ENCODE measurements at regions of chr12 and their contacts with region 1.

Region 1: DNA sequence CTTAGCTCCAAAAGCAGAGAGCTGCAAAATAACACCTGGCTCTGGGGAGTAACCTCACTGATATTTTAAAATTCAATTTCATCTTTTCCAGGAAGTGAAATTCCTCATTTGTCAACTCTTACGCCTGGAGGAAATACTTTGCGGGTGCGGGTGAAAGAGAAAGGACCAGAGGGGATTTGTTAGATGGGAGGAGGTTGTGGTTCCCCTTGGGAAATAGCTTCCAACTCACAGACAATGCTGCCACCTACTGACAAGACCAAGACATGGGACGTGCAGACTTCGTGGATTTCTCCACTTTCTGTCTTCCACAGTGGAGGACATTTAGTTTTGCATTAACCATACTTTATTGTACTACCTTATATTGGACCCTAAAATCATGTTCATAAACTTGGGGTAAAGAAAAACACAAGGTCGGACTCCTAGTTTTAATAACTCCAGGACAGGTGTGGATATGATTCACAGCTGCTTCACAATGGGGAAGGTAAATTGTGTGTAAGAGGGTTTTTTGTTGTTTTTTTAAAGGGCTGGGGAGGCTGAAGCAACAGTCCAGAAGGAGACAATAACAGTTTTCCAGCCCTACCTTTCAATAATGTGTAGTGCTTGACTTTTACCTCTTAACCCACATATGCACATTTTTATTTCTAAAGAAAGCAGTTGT is 10.8 kb downstream of the FBXL14 start:
- DNase-seq: peak; percentile 36
- ATAC-seq: peak; percentile 96
- H3K4me3 Mint-ChIP-seq: peak overlapping the region; percentile 69
- H3K27ac Mint-ChIP-seq: no peak overlapping the region
- H3K4me1 Mint-ChIP-seq: peaks cover 17% of the 10 kb centered on the region
- H3K27me3 Mint-ChIP-seq: no peaks in the 10 kb centered on the region
- CTCF ChIP-seq: peak; percentile 96

Region 2: GRCh38 chr12:442235-442884 is 1141.2 kb before region 1 on chr12:
- CTCF ChIA-PET with region 1: interaction called, 4 read pairs
- POLR2A ChIA-PET with region 1: no interaction called
- intact Hi-C with region 1: loop called (anchors 2 kb)
- DNase-seq: no peak
- ATAC-seq: no peak
- H3K4me3 Mint-ChIP-seq: no peak overlapping the region
- H3K27ac Mint-ChIP-seq: no peak overlapping the region
- H3K4me1 Mint-ChIP-seq: no peaks in the 10 kb centered on the region
- H3K27me3 Mint-ChIP-seq: peaks cover 2% of the 10 kb centered on the region
- CTCF ChIP-seq: no peak

Region 3: GRCh38 chr12:575948-576612 is 1007.5 kb before region 1 on chr12:
- CTCF ChIA-PET with region 1: interaction called, 14 read pairs
- POLR2A ChIA-PET with region 1: interaction called, 4 read pairs
- intact Hi-C with region 1: loop called (anchors 1 kb)
- DNase-seq: peak; percentile 91
- ATAC-seq: peak; percentile 99
- H3K4me3 Mint-ChIP-seq: peak overlapping the region; percentile 75
- H3K27ac Mint-ChIP-seq: no peak overlapping the region
- H3K4me1 Mint-ChIP-seq: peaks cover 11% of the 10 kb centered on the region
- H3K27me3 Mint-ChIP-seq: no peaks in the 10 kb centered on the region
- CTCF ChIP-seq: peak; percentile 70

Region 4: DNA sequence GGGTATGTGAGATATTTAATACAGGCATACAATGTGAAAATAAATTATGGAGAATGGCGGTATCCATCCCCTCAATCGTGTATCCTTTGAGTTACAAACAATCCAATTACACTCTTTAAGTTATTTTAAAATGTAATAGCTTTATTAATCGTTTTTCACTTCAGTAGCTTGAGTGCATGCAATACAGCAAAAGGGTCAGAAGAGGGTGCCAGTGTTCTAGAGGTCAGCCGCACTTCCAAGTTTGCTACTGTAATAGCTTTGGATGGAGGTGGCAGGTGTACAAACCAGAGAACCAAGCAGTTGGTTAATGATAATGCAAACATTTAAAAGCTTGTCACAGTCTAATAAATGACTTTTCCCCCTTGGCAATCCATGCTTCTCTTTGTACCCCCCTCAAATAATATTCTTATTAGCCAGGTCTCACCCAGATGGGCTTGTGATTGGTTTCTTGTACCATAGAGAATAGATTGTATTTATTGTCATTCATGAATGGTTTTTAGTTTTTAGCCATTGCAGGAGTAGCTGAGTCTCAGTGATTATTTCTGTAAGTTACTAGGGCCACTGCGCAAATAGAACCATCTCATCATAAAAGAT is 465.5 kb before region 1 on chr12:
- CTCF ChIA-PET with region 1: interaction called, 287 read pairs
- POLR2A ChIA-PET with region 1: interaction called, 14 read pairs
- intact Hi-C with region 1: loop called (anchors 1 kb)
- DNase-seq: peak; percentile 40
- ATAC-seq: peak; percentile 81
- H3K4me3 Mint-ChIP-seq: no peak overlapping the region
- H3K27ac Mint-ChIP-seq: no peak overlapping the region
- H3K4me1 Mint-ChIP-seq: peaks cover 2% of the 10 kb centered on the region
- H3K27me3 Mint-ChIP-seq: no peaks in the 10 kb centered on the region
- CTCF ChIP-seq: peak; percentile 42

Region 5: GRCh38 chr12:1517007-1517406 is 66.5 kb before region 1 on chr12:
- CTCF ChIA-PET with region 1: interaction called, 6 read pairs
- POLR2A ChIA-PET with region 1: no interaction called
- intact Hi-C with region 1: loop called (anchors 2 kb)
- DNase-seq: no peak
- ATAC-seq: no peak
- H3K4me3 Mint-ChIP-seq: no peak overlapping the region
- H3K27ac Mint-ChIP-seq: no peak overlapping the region
- H3K4me1 Mint-ChIP-seq: no peaks in the 10 kb centered on the region
- H3K27me3 Mint-ChIP-seq: peaks cover 19% of the 10 kb centered on the region
- CTCF ChIP-seq: no peak

Region 6: DNA sequence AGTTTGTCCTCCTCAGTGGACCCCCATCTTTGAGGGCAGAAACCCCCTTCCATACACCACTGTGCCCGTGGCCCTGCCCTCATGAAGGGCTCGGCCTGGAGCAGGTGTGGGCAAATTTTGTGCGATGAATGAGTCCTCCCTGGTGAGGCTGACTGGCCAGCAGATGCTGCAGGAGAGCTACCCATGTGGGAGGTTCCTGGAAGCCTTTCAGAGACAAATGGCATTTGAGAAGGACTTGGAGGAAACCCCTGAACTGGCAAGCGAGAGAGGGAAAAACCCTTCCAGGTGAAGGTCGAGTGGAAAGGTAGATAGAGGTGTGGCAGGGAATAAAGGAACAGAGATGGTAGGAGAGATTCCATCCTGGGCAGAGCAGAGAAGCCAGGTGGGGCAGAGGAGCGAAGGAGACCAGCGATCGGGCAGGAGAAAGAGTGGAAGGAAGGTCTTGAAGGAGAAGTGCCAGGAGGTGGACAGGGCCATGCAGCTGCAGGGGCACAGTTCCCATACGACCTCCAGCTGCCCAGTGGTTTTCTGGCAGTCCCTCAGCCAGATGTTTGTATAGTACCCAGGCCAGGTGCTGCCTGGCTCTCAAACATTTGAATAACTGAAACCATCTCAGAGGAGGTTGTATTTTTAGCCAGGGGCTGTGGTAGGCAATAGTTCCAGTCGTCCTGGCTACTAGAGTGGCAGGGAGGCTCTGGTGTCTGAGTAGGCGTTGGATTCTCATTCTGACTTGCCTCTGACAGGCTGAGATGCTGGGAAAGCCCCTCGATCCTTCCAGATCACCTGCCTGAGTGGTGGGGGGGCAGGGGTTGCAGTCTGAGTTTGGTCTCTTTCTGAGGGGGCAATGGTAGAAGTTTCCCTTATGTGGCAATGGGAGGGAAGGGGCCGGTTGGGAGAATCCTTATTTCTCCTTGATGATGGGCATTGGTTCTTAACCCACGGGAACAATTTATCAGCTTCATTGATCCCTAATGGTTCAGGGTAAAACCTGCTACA is 29.3 kb before region 1 on chr12:
- CTCF ChIA-PET with region 1: no interaction called
- POLR2A ChIA-PET with region 1: no interaction called
- intact Hi-C with region 1: loop called (anchors 2 kb)
- DNase-seq: peak; percentile 36
- ATAC-seq: peak; percentile 89
- H3K4me3 Mint-ChIP-seq: peak overlapping the region; percentile 11
- H3K27ac Mint-ChIP-seq: peak overlapping the region; percentile 81
- H3K4me1 Mint-ChIP-seq: peaks cover 15% of the 10 kb centered on the region
- H3K27me3 Mint-ChIP-seq: no peaks in the 10 kb centered on the region
- CTCF ChIP-seq: no peak

Region 7: DNA sequence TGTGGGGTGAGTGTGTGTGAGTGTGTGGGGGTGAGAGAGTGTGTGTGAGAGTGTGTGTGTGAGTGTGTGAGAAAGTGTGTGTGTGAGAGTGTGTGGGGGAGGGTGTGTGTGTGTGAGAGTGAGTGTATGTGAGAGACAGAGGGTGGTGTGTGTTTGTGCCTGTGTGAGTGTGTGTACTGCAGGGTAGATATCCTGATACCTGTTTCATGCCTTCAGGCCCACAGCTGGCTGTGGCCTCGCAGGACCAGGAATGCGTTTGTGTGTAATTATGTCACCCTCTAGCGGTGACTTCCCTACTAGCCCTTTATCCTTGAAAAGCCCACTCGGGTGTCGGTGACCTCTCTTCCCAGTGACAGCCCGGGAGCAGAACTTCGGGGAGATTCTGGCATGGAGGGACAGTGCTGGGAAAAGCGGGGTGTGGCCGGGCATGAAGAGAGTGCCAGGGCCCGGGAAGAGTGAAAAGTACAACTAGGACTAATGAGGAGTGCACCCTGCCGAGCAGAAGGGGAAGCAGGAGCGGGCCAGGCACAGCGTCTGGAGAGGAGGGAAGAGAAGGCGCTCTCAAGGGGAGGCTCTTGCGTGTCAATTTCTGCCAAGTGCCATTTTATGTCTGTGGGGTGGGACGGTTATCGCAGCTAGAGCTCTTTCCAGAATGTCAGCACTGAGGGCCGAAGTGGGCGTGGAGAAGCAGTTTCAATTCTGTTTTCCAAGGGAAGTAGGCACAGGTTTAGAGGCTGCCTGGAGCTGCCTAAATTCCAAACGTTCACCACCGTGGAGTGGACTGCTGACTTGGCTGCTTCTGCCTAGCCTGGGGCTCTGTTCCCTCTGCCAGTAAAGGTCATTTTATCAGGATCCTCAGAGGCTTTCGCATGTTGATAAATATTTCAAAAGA is 21.8 kb after region 1 on chr12:
- CTCF ChIA-PET with region 1: interaction called, 24 read pairs
- POLR2A ChIA-PET with region 1: interaction called, 4 read pairs
- intact Hi-C with region 1: loop called (anchors 2 kb)
- DNase-seq: peak; percentile 31
- ATAC-seq: peak; percentile 55
- H3K4me3 Mint-ChIP-seq: peak overlapping the region; percentile 91
- H3K27ac Mint-ChIP-seq: peak overlapping the region; percentile 78
- H3K4me1 Mint-ChIP-seq: peaks cover 44% of the 10 kb centered on the region
- H3K27me3 Mint-ChIP-seq: no peaks in the 10 kb centered on the region
- CTCF ChIP-seq: no peak

Region 8: DNA sequence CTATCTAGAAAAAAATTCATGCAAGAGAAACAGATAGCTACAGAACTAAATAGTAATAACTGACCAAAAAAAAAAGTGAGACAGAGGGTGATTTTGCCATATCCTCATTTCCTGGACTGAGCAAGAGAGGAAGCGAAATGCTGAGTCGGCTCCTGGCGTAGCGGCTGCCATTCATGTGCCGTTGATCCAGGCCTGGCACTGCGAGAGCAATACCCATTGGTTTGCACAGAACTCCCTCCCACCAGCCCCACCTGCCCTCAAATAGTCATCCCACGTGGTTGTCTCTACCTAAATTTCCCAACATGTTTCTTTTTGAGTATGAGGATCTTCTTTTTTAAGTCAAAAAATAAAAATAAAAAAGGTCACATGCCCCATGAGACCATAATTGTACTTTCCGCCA is 36.0 kb after region 1 on chr12:
- CTCF ChIA-PET with region 1: no interaction called
- POLR2A ChIA-PET with region 1: no interaction called
- intact Hi-C with region 1: no loop called
- DNase-seq: no peak
- ATAC-seq: peak; percentile 31
- H3K4me3 Mint-ChIP-seq: no peak overlapping the region
- H3K27ac Mint-ChIP-seq: no peak overlapping the region
- H3K4me1 Mint-ChIP-seq: peaks cover 34% of the 10 kb centered on the region
- H3K27me3 Mint-ChIP-seq: peaks cover 5% of the 10 kb centered on the region
- CTCF ChIP-seq: no peak

Measured in activated B cell treated with CpG ODN at 0.5 μM for 24 hours (primary cell).